MCF 10A (cell line): ENCODE measurements at regions of chr2 and their contacts with region 1.

Region 1: DNA sequence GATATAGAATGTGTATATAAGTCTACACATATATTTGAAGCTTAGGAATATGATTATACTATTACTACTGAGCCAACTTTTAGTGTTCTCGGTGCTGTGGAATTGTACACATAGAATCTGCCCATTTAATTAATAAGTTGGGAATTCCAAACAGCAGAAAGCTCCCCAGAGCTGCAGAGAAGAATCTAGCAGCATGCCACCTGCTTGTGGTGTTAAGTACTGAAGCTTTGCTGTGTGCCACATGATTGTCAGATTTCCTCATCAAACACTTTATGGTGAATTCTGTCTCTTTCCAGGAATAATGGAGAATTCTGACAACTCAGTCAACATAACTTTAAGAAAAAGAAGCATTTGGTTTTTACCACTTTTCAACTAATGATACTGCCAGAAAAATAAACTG is 117.8 kb downstream of the WDSUB1 start:
- DNase-seq: peak; percentile 58
- H3K4me3 Mint-ChIP-seq: no peak overlapping the region
- H3K27ac Mint-ChIP-seq: no peak overlapping the region
- H3K4me1 Mint-ChIP-seq: peaks cover 8% of the 10 kb centered on the region
- H3K27me3 Mint-ChIP-seq: no peaks in the 10 kb centered on the region
- CTCF ChIP-seq: peak; percentile 16

Region 2: GRCh38 chr2:159035790-159036411 is 132.8 kb before region 1 on chr2:
- CTCF ChIA-PET with region 1: interaction called, 4 read pairs
- POLR2A ChIA-PET with region 1: no interaction called
- intact Hi-C with region 1: loop called (anchors 1 kb)
- DNase-seq: peak; percentile 73
- H3K4me3 Mint-ChIP-seq: no peak overlapping the region
- H3K27ac Mint-ChIP-seq: no peak overlapping the region
- H3K4me1 Mint-ChIP-seq: peaks cover 33% of the 10 kb centered on the region
- H3K27me3 Mint-ChIP-seq: no peaks in the 10 kb centered on the region
- CTCF ChIP-seq: peak; percentile 53

Region 3: GRCh38 chr2:159192371-159192922 is 23.7 kb after region 1 on chr2:
- CTCF ChIA-PET with region 1: no interaction called
- POLR2A ChIA-PET with region 1: no interaction called
- intact Hi-C with region 1: no loop called
- DNase-seq: no peak
- H3K4me3 Mint-ChIP-seq: no peak overlapping the region
- H3K27ac Mint-ChIP-seq: no peak overlapping the region
- H3K4me1 Mint-ChIP-seq: no peaks in the 10 kb centered on the region
- H3K27me3 Mint-ChIP-seq: no peaks in the 10 kb centered on the region
- CTCF ChIP-seq: no peak

Region 4: DNA sequence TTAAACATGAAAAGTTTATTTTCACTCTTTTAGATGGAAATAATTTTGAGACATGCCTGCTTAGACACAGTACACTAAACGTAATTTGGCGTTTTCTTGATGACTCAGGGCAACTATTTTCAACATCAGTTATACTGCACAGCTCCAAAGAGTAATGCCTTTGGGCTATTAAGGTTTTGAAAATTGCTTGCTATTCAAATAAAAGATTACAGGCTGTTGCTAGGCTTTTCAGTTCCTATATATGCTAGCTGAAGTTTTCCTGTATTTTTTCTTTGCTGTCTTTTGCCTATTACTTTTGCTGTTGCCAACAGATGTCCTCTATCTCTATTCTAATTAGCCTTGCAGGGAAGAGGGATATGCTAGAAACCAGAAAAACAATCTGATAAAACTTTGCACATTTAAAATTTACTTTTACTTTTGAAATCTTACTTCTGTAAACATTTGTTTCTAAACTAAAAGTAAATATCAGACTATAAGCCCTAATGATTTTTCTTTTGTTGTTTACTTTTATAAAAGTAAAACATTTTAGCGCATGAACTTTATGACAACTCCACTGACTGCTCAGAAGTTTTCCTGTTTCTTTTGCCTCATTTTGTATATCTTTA is 231.2 kb after region 1 on chr2:
- CTCF ChIA-PET with region 1: no interaction called
- POLR2A ChIA-PET with region 1: no interaction called
- intact Hi-C with region 1: no loop called
- DNase-seq: peak; percentile 53
- H3K4me3 Mint-ChIP-seq: no peak overlapping the region
- H3K27ac Mint-ChIP-seq: peak overlapping the region; percentile 9
- H3K4me1 Mint-ChIP-seq: no peaks in the 10 kb centered on the region
- H3K27me3 Mint-ChIP-seq: no peaks in the 10 kb centered on the region
- CTCF ChIP-seq: no peak